Mammary epithelial cell (primary cell): ENCODE measurements at regions of chr11 and their contacts with region 1.

Region 1: DNA sequence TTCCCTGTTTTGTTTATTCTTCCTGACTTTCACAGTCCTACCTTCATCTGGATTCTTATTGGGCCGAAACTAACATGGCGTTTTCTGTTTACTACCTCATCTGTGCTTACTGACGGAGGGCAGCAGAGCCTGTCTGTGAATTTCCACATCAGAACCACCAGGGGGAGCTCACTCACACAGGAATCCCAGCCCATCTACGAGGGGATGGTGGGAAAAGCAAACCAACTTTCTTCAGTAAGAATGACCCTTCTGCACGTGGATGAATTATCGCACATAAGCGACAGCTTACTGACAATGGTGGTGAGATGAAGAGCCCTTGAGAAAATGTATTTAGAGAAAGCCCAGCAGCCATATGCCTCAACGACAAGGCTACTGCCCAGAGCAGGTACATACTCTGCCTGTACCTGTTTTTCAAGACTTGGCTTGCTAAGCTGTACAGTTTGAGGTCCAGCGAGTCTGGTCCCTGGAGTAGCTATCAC is 42.5 kb downstream of the LARGE2 start:
- DNase-seq: peak; percentile 54
- H3K4me3 ChIP-seq: no peak overlapping the region
- H3K27ac ChIP-seq: peak overlapping the region; percentile 39
- H3K4me1 ChIP-seq: peaks cover 7% of the 10 kb centered on the region
- H3K27me3 ChIP-seq: no peaks in the 10 kb centered on the region
- CTCF ChIP-seq: peak; percentile 91 to 95

Region 2: GRCh38 chr11:45755281-45755859 is 209.6 kb before region 1 on chr11:
- CTCF ChIA-PET with region 1: no interaction called
- dilution Hi-C with region 1: no loop called
- in situ Hi-C with region 1: no loop called
- intact Hi-C with region 1: no loop called
- DNase-seq: no peak
- H3K4me3 ChIP-seq: no peak overlapping the region
- H3K27ac ChIP-seq: no peak overlapping the region
- H3K4me1 ChIP-seq: no peaks in the 10 kb centered on the region
- H3K27me3 ChIP-seq: peaks cover 2% of the 10 kb centered on the region
- CTCF ChIP-seq: no peak

Region 3: GRCh38 chr11:45864041-45864440 is 100.9 kb before region 1 on chr11:
- CTCF ChIA-PET with region 1: no interaction called
- dilution Hi-C with region 1: no loop called
- in situ Hi-C with region 1: no loop called
- intact Hi-C with region 1: no loop called
- DNase-seq: no peak
- H3K4me3 ChIP-seq: no peak overlapping the region
- H3K27ac ChIP-seq: no peak overlapping the region
- H3K4me1 ChIP-seq: peaks cover 10% of the 10 kb centered on the region
- H3K27me3 ChIP-seq: no peaks in the 10 kb centered on the region
- CTCF ChIP-seq: no peak

Region 4: DNA sequence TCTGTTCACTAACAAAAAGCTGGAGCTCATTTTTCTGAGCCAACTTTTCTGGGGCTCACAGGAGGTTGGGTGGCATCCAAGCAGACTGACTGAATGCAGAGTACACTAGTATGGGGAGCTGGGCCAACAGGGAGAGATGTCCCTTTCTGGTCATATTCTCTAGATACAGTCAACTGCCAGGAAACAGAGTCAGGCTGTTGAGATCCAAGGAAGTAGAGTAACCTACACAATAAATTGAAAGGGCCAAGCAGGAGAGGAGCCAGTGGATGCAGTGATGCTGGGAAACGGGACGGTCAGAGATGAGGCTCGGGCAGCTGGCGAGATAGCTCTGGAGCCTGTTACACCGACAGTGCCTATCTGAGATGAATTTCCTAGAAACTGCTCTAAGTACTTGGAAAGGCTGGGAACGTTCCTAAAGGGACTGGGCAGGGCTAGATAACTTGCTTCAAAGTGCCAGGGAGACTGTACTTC is 28.6 kb after region 1 on chr11:
- CTCF ChIA-PET with region 1: interaction called, 10 read pairs
- dilution Hi-C with region 1: no loop called
- in situ Hi-C with region 1: no loop called
- intact Hi-C with region 1: no loop called
- DNase-seq: no peak
- H3K4me3 ChIP-seq: no peak overlapping the region
- H3K27ac ChIP-seq: no peak overlapping the region
- H3K4me1 ChIP-seq: no peaks in the 10 kb centered on the region
- H3K27me3 ChIP-seq: no peaks in the 10 kb centered on the region
- CTCF ChIP-seq: no peak

Region 5: DNA sequence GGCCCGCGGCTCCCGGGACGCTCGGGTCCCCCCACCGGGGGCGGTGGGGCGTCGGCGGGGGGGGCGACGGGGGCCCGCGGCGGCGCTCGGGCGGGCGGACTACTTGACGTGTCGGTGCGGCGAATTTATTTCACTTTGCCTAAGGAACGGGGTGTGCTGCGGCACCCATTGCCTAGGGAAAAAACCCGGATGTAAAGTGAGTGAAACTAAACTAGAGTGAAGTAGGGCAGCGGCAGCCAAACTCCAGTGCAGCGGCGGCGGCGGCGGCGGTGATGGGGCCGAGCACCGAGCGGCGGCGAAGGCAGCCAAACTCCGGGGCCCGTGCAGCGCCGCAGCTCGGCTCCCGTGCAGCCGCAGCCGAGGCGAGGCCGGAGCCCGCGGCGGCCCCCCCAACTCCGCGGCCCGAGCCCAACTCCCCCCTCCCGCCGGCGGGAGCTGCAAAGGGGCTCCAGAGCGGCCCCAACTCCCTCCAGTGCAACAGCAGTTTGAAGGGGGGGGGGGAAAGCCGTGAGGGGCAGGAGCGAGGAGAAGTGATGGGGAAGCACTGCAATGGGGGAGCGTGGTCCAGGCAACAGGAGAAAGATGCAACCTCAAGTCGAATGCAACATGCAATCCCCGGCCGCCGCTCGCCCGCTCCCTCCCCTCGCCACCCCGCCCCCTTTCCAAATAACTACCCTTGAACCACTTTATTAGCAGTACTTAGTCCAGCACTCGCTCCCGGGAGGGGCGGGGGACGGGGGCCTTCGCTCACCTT is 157.0 kb after region 1 on chr11:
- CTCF ChIA-PET with region 1: no interaction called
- dilution Hi-C with region 1: no loop called
- in situ Hi-C with region 1: no loop called
- intact Hi-C with region 1: loop called (anchors 5 kb)
- DNase-seq: peak; percentile 85
- H3K4me3 ChIP-seq: peak overlapping the region; percentile 66 to 77 (median 73)
- H3K27ac ChIP-seq: peak overlapping the region; percentile 18
- H3K4me1 ChIP-seq: peaks cover 11% of the 10 kb centered on the region
- H3K27me3 ChIP-seq: no peaks in the 10 kb centered on the region
- CTCF ChIP-seq: no peak

Region 6: DNA sequence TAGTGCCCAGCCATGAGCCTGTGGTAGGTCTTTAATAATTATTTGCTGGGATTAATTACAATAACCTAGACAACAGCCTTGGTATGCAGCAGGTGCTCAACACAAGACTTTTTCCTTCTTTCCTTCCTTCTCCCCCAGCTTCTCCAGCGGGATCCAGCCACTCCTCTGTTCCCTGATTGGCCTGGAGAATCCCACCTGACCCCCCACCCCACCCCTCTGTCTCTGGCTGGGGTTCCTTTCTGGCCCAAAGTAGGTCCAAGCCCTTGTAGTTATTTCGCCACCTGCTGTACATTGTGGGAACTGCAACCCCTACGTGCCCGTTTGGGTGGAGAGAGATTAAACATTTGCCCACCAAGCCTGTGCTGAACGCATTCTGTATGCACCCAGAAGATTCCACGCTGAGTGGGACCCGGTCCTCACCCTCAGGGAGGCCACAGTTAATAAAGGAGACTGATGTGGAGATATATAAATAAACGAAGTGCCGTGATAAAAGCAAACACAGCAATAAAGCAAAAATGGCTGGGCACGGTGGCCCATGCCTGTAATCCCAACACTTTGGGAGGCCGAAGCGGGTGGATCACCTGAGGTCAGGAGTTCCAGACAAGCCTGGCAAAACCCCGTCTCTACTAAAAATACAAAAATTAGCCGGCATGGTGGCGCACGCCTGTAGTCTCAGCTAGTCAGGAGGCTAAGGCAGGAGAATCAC is 350.2 kb after region 1 on chr11:
- CTCF ChIA-PET with region 1: no interaction called
- dilution Hi-C with region 1: no loop called
- in situ Hi-C with region 1: no loop called
- intact Hi-C with region 1: loop called (anchors 1 kb)
- DNase-seq: peak; percentile 58
- H3K4me3 ChIP-seq: no peak overlapping the region
- H3K27ac ChIP-seq: no peak overlapping the region
- H3K4me1 ChIP-seq: no peaks in the 10 kb centered on the region
- H3K27me3 ChIP-seq: no peaks in the 10 kb centered on the region
- CTCF ChIP-seq: peak; percentile 90 to 95